Naive thymus-derived CD4-positive, alpha-beta T cell (primary cell): ENCODE measurements at regions of chr2 and their contacts with region 1.

Region 1: DNA sequence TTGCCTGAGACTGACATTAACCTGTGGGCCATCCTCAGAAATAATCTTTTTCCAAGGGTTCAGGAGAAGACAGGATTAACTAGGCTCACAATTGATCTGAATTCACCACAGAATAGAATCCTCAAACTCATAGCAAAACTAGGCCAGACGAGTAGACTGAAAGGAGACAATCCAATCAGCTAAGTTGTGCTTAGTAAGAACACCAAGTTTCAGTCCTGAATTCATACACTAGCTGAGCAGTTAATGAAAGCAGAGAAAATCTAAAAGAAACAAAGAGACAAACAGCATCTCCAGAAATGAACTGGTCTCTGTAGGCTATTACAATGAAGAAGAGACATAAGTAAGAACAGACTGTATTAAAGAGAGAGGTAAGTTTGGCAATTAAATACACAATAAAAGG is 89.5 kb downstream of the GORASP2 start:
- DNase-seq: no peak
- ATAC-seq: no peak
- H3K4me3 ChIP-seq: no peak overlapping the region
- H3K4me3 Mint-ChIP-seq: no peak overlapping the region
- H3K27ac ChIP-seq: no peak overlapping the region
- H3K27ac Mint-ChIP-seq: peak overlapping the region in 4 of 9 donors; percentile 13 to 81 (median 38)
- H3K4me1 ChIP-seq: peaks cover 0 to 8% of the 10 kb centered on the region in 2 donors
- H3K4me1 Mint-ChIP-seq: peaks cover 11 to 64% (median 49%) of the 10 kb centered on the region in 7 donors
- H3K27me3 ChIP-seq: no peaks in the 10 kb centered on the region
- H3K27me3 Mint-ChIP-seq: no peaks in the 10 kb centered on the region

Region 2: GRCh38 chr2:170013802-170014551 is 1004.5 kb before region 1 on chr2:
- CTCF ChIA-PET with region 1: no interaction called
- POLR2A ChIA-PET with region 1: no interaction called
- intact Hi-C with region 1: no loop called
- DNase-seq: no peak
- ATAC-seq: no peak
- H3K4me3 ChIP-seq: no peak overlapping the region
- H3K4me3 Mint-ChIP-seq: no peak overlapping the region
- H3K27ac ChIP-seq: no peak overlapping the region
- H3K27ac Mint-ChIP-seq: no peak overlapping the region
- H3K4me1 ChIP-seq: no peaks in the 10 kb centered on the region
- H3K4me1 Mint-ChIP-seq: peaks cover 0 to 4% (median 0%) of the 10 kb centered on the region in 7 donors
- H3K27me3 ChIP-seq: no peaks in the 10 kb centered on the region
- H3K27me3 Mint-ChIP-seq: no peaks in the 10 kb centered on the region

Region 3: DNA sequence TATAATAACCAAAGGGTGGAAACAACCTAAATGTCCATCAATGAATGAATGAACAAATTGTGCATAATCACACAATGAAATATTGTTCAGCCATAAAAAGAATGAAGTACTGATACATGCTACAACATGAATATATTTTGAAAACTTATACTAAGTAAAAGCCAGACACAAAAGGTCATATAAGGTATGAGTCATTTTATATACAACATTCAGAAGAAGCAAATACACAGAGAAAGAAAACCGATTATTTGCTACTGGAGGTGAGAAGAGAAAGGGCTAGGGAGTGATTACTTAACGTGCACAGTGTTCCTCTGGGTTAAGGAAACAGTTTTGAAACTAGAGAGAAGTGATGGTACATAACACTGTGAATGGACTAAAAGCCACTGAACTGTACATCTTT is 15.8 kb after region 1 on chr2:
- CTCF ChIA-PET with region 1: interaction called, 4 read pairs
- POLR2A ChIA-PET with region 1: no interaction called
- intact Hi-C with region 1: loop called in 1 of 2 experiments (anchors 2 kb)
- DNase-seq: no peak
- ATAC-seq: no peak
- H3K4me3 ChIP-seq: no peak overlapping the region
- H3K4me3 Mint-ChIP-seq: no peak overlapping the region
- H3K27ac ChIP-seq: no peak overlapping the region
- H3K27ac Mint-ChIP-seq: peak overlapping the region in 1 of 9 donors; percentile 43
- H3K4me1 ChIP-seq: no peaks in the 10 kb centered on the region
- H3K4me1 Mint-ChIP-seq: peaks cover 3 to 16% (median 7%) of the 10 kb centered on the region in 7 donors
- H3K27me3 ChIP-seq: no peaks in the 10 kb centered on the region
- H3K27me3 Mint-ChIP-seq: no peaks in the 10 kb centered on the region

Region 4: DNA sequence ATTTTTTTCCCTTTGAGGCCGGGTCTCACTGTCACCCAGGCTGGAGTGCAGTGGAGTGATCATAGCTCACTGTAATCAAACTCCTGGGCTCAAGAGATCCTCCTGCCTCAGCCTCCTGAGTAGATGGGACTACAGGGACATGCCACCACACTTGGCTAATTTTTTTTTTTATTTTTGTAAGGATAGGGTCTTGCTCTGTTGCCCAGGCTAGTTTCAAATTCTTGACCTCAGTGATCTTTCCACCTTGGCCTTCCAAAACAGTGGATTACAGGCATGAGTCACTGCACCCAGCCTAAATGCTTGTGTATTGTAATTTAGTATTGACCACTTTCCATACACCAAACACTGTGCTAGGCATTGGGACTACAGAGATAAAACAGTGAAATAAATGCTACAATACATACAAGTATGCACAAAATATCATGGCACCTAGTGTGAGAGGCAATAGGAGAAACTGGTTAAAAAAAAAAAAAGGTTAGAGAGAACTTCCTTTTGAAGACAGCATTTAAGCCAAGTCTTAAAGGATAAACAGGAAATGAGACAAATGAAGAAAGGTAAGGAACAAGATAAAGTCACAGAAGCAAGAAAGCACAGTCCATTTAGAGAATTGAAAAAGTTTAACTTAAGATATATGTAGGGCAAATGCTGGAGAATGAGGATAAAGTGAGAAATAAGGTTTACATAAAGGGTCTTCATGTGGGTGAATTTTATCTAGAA is 23.9 kb after region 1 on chr2:
- CTCF ChIA-PET with region 1: interaction called, 3 read pairs
- POLR2A ChIA-PET with region 1: no interaction called
- intact Hi-C with region 1: loop called in 1 of 2 experiments (anchors 2 kb)
- DNase-seq: peak in 6 of 9 donors; percentile 30 to 55 (median 44)
- ATAC-seq: peak; percentile 42
- H3K4me3 ChIP-seq: no peak overlapping the region
- H3K4me3 Mint-ChIP-seq: peak overlapping the region in 9 of 10 donors; percentile 26 to 86 (median 59)
- H3K27ac ChIP-seq: peak overlapping the region; percentile 43
- H3K27ac Mint-ChIP-seq: peak overlapping the region; percentile 85 to 97 (median 95)
- H3K4me1 ChIP-seq: peaks cover 6 to 30% of the 10 kb centered on the region in 2 donors
- H3K4me1 Mint-ChIP-seq: peaks cover 23 to 51% (median 40%) of the 10 kb centered on the region in 7 donors
- H3K27me3 ChIP-seq: no peaks in the 10 kb centered on the region
- H3K27me3 Mint-ChIP-seq: no peaks in the 10 kb centered on the region